Mammary epithelial cell (primary cell): ENCODE measurements at regions of chr15 and their contacts with region 1.

Region 1: GRCh38 chr15:52337198-52337853 is 41.7 kb upstream of the MYO5C start:
- DNase-seq: peak; percentile 79
- H3K4me3 ChIP-seq: no peak overlapping the region
- H3K27ac ChIP-seq: peak overlapping the region; percentile 17
- H3K4me1 ChIP-seq: peaks cover 41% of the 10 kb centered on the region
- H3K27me3 ChIP-seq: no peaks in the 10 kb centered on the region
- CTCF ChIP-seq: no peak

Region 2: GRCh38 chr15:52558196-52558595 is 220.9 kb after region 1 on chr15:
- CTCF ChIA-PET with region 1: no interaction called
- dilution Hi-C with region 1: no loop called
- in situ Hi-C with region 1: no loop called
- intact Hi-C with region 1: loop called (anchors 2 kb)
- DNase-seq: peak; percentile 96
- H3K4me3 ChIP-seq: peak overlapping the region; percentile 13 to 58 (median 49)
- H3K27ac ChIP-seq: peak overlapping the region; percentile 87
- H3K4me1 ChIP-seq: peaks cover 34% of the 10 kb centered on the region
- H3K27me3 ChIP-seq: no peaks in the 10 kb centered on the region
- CTCF ChIP-seq: no peak

Region 3: DNA sequence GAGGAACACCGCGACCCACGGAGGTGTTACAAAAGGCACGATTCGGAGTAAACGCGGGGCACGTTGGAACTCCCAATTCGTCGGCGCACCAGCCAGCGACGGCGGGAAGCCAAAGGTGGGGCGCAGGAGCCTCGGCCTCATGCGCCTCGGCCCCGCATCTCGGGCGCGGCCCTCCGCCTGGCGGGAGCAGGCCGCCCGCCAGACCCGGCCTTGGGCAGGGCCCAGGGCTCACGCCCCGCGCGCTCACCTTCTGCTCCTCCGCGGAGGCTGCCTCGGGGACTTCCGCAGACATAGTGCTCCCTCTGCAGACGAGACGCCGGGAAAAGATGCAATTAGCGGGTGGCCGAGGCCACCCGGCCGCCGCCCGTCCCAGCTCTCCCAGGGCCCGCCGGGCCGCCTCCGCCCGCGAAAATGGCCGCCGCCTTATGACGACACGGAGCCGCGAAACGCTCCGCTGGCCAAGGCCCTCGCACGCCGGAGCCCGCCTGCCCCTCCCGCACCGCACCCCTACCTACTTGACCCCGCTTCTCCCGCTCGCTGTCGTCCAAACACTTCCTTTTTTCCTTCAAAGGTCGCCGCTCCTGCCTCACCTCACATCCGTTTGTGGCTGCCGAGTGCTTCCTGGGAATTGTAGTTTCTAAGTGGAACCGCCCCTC is 231.4 kb after region 1 on chr15 and contains the start of gene ARPP19:
- CTCF ChIA-PET with region 1: no interaction called
- dilution Hi-C with region 1: no loop called
- in situ Hi-C with region 1: no loop called
- intact Hi-C with region 1: no loop called
- DNase-seq: peak; percentile 93
- H3K4me3 ChIP-seq: peak within 1 kb of the TSS; percentile 71 to 76 (median 74)
- H3K27ac ChIP-seq: peak within 1 kb of the TSS; percentile 93
- H3K4me1 ChIP-seq: peaks cover 5% of the 10 kb centered on the region
- H3K27me3 ChIP-seq: no peaks in the 10 kb centered on the region
- CTCF ChIP-seq: peak in 1 of 2 donors; percentile 31
- total RNA-seq, gene ARPP19: 153 to 200 TPM

Region 4: GRCh38 chr15:52679232-52680040 is 342.1 kb after region 1 on chr15 and contains the start of gene ATOSA:
- CTCF ChIA-PET with region 1: no interaction called
- dilution Hi-C with region 1: no loop called
- in situ Hi-C with region 1: no loop called
- intact Hi-C with region 1: loop called (anchors 2 kb)
- DNase-seq: peak; percentile 88
- H3K4me3 ChIP-seq: peak within 1 kb of the TSS; percentile 67 to 99 (median 95)
- H3K27ac ChIP-seq: peak within 1 kb of the TSS; percentile 83
- H3K4me1 ChIP-seq: peaks cover 4% of the 10 kb centered on the region
- H3K27me3 ChIP-seq: no peaks in the 10 kb centered on the region
- CTCF ChIP-seq: peak in 1 of 2 donors; percentile 18
- total RNA-seq, gene ATOSA: 14.4 to 25.3 TPM